ENCODE measurements at regions of chr14 and their contacts with region 1.

Region 1: DNA sequence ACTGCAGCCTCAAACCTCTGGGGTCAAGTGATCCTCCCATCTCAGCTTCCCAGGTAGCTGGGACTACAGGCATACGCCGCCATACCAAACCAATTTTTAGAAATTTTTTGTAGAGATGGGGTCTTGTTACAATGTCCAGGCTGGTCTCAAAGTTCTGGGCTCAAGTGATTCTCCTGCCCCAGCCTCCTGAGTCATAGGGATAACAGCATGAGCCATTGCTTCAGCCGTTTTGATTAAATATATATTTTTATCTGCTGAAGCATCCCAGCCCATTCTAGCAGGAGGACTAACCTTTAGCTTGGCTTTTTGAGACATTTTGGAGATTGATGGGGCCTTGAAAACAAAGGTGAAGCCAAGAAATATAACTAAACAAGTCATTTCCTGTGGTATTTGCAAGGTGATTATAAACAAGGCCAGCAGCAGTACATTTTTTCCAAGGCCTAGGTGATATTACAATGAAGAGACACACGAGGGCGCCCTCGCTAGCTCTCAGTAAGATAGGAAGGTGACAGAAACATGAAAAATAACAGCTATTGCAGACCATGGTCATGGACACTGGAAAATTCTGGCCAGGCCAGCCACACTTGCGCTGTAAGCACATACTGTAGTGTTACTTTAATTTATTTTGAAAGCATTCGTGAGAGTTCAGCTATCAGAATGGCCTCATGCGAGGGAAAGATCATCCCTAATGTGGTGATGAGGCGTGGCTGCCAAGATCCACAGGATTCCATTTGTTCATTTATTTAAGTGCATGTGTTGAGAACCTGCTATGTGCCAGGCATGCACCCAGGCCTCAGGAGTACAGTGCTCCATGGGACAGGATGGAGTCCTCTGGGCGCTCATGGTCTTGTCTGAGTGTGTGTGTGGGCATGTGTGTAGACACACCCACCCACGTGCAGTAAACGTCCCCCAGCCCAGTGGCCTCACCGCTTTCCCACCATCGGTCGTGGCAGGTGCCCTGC is 63.5 kb downstream of the DGLUCY start:
- H3K4me3 ChIP-seq: no peak overlapping the region
- H3K27ac ChIP-seq: no peak overlapping the region
- H3K4me1 ChIP-seq: no peaks in the 10 kb centered on the region
- CTCF ChIP-seq: peak; percentile 40; the same call in 1 of the 2 replicates

Region 2: GRCh38 chr14:90894241-90894640 is 283.1 kb before region 1 on chr14:
- CTCF ChIA-PET with region 1: interaction called, 13 read pairs
- POLR2A ChIA-PET with region 1: no interaction called
- H3K4me3 ChIP-seq: no peak overlapping the region
- H3K27ac ChIP-seq: no peak overlapping the region
- H3K4me1 ChIP-seq: no peaks in the 10 kb centered on the region
- CTCF ChIP-seq: no peak

Region 3: GRCh38 chr14:90903101-90903500 is 274.3 kb before region 1 on chr14:
- CTCF ChIA-PET with region 1: interaction called, 169 read pairs
- POLR2A ChIA-PET with region 1: interaction called, 4 read pairs
- H3K4me3 ChIP-seq: no peak overlapping the region
- H3K27ac ChIP-seq: no peak overlapping the region
- H3K4me1 ChIP-seq: no peaks in the 10 kb centered on the region
- CTCF ChIP-seq: peak; percentile 58; the same call in 1 of the 2 replicates

Region 4: GRCh38 chr14:91138511-91139359 is 38.6 kb before region 1 on chr14:
- CTCF ChIA-PET with region 1: interaction called, 15 read pairs
- POLR2A ChIA-PET with region 1: no interaction called
- H3K4me3 ChIP-seq: no peak overlapping the region
- H3K27ac ChIP-seq: no peak overlapping the region
- H3K4me1 ChIP-seq: no peaks in the 10 kb centered on the region
- CTCF ChIP-seq: 0 out of 2 replicates have a peak, but pooled peaks have one; percentile 47

Region 5: DNA sequence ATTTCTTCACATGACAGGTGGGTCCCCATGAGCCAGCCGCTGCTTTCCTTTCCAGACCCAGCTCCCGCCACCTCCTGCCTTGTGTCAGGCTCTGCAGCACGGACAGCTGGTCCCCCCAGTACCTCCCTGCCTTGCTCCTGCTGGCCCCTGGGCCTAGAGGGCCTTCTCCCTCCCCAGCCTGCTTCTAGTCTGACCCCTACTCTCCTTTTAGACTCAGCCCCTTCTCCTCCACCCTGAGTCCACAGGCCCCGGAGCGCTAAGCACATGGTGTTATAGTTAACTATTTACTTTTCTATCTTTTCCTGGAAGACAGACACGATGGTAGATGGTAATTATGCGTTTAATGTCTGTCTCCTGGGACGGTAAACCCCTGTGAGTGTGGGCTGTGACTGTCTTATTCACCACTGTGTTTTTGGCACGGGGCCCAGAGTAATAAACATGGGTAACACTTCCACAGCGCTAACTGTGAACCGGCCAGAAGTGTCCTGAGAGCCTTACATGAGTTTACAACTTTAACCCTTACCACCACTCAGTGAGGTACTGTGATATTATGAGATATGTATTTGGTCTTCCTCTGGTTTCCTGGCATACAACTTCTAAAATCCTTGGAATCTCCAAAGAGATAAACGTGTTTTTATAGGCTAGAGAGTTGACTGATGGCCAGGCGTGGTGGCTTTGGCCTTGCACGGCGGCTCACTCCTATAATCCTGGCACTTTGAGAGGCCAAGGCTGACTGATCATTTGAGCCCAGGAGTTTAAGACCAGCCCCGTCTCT is 22.3 kb before region 1 on chr14:
- CTCF ChIA-PET with region 1: interaction called, 12 read pairs
- POLR2A ChIA-PET with region 1: interaction called, 3 read pairs
- H3K4me3 ChIP-seq: no peak overlapping the region
- H3K27ac ChIP-seq: peak overlapping the region; percentile 76
- H3K4me1 ChIP-seq: peaks cover 6% of the 10 kb centered on the region
- CTCF ChIP-seq: no peak

Region 6: GRCh38 chr14:91258011-91258618 is 80.8 kb after region 1 on chr14:
- CTCF ChIA-PET with region 1: interaction called, 10 read pairs
- POLR2A ChIA-PET with region 1: no interaction called
- H3K4me3 ChIP-seq: no peak overlapping the region
- H3K27ac ChIP-seq: no peak overlapping the region
- H3K4me1 ChIP-seq: 0 out of 2 replicates have a peak, but pooled peaks cover 8% of the 10 kb centered on the region
- CTCF ChIP-seq: no peak

Region 7: DNA sequence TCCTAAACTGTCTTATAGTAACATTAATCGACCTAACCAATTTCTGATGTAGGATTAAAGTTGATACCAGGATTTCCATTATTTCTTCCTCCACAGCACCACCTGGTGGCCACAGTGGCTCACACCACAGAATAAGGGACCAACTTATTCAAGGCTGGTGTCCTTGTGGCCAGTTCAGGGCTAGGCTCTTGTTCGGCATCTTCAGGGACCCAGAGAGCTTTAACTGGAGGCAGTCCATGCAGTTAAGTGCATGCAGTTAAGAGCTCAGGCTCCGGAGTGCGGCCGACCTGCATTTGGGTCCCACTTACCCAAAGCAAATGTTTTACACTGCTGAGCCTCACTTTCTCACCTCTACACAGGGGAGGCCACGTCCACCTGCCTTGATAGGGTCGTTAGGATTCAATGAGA is 109.2 kb after region 1 on chr14:
- CTCF ChIA-PET with region 1: interaction called, 156 read pairs
- POLR2A ChIA-PET with region 1: no interaction called
- H3K4me3 ChIP-seq: no peak overlapping the region
- H3K27ac ChIP-seq: no peak overlapping the region
- H3K4me1 ChIP-seq: peaks cover 19% of the 10 kb centered on the region
- CTCF ChIP-seq: peak; percentile 83

Region 8: GRCh38 chr14:91341751-91342154 is 164.4 kb after region 1 on chr14:
- CTCF ChIA-PET with region 1: no interaction called
- POLR2A ChIA-PET with region 1: no interaction called
- H3K4me3 ChIP-seq: no peak overlapping the region
- H3K27ac ChIP-seq: no peak overlapping the region
- H3K4me1 ChIP-seq: no peaks in the 10 kb centered on the region
- CTCF ChIP-seq: no peak

Measured in HEK293 (cell line).